HCT116 (cell line): ENCODE measurements at regions of chr12 and their contacts with region 1.

Region 1: DNA sequence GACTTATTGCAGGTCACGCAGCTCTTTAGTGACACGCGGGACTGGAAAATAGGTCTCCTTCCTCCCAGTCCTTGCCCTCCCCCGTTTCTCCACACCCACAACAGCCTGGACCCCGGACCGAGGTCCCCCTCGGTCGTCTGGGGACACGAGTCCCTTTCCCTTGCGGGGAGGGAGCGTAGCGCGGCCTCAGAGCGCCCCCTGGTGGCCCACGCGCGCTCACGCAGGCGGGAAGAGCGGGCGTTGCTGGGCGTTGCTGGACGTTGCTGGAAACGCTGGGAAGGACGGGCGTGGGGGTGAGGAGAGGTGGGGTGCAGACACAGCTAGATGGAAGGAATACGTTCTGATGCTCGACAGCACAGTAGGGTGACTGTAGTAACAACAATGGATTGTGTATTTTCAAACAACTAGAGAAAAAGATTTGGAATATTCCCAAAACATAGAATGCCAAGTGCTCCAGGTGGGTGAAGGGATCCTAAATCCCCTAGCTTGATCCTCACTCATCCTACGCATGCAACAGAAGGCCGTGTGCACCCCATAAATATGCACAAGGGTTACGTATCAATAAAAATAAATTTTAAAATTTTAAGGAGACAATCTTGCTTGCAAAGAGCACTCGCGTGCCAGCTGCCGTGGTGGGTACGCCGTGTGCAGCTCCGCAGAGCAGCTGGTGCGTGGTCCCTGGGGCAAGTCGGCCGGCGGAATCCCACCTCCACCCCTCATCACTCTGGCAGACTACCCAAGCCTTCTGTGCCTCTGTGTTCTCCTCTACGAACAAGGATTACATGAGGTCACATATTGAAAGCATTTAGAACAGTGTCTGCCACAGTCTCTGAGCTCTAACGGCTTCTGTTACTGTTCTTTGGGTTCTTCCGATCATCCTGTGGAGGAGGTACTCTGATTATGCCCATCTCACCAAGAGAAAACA is 87.4 kb downstream of the B4GALNT3 start:
- DNase-seq: peak; percentile 34
- ATAC-seq: peak; percentile 97
- H3K4me3 ChIP-seq: no peak overlapping the region
- H3K27ac ChIP-seq: no peak overlapping the region
- H3K4me1 ChIP-seq: peaks cover 0 to 4% of the 10 kb centered on the region in 2 experiments; a peak in 1 of 4 replicates
- H3K27me3 ChIP-seq: no peaks in the 10 kb centered on the region
- CTCF ChIP-seq: peak; percentile 97 to 99 (median 97)
- POLR2A ChIP-seq: no peak
- RAD21 ChIP-seq: peak; percentile 100

Region 2: GRCh38 chr12:442235-442884 is 104.8 kb before region 1 on chr12:
- CTCF ChIA-PET with region 1: interaction called, 22 read pairs
- POLR2A ChIA-PET with region 1: no interaction called
- RAD21 ChIA-PET with region 1: interaction called, 3 read pairs
- intact Hi-C with region 1: loop called (anchors 1 kb)
- DNase-seq: peak; percentile 23
- ATAC-seq: peak; percentile 82
- H3K4me3 ChIP-seq: no peak overlapping the region
- H3K27ac ChIP-seq: no peak overlapping the region
- H3K4me1 ChIP-seq: no peaks in the 10 kb centered on the region
- H3K27me3 ChIP-seq: no peaks in the 10 kb centered on the region
- CTCF ChIP-seq: peak; percentile 78 to 91 (median 78)
- POLR2A ChIP-seq: no peak
- RAD21 ChIP-seq: peak; percentile 91